CD8-positive, alpha-beta T cell (primary cell): ENCODE measurements at regions of chr1 and their contacts with region 1.

Region 1: DNA sequence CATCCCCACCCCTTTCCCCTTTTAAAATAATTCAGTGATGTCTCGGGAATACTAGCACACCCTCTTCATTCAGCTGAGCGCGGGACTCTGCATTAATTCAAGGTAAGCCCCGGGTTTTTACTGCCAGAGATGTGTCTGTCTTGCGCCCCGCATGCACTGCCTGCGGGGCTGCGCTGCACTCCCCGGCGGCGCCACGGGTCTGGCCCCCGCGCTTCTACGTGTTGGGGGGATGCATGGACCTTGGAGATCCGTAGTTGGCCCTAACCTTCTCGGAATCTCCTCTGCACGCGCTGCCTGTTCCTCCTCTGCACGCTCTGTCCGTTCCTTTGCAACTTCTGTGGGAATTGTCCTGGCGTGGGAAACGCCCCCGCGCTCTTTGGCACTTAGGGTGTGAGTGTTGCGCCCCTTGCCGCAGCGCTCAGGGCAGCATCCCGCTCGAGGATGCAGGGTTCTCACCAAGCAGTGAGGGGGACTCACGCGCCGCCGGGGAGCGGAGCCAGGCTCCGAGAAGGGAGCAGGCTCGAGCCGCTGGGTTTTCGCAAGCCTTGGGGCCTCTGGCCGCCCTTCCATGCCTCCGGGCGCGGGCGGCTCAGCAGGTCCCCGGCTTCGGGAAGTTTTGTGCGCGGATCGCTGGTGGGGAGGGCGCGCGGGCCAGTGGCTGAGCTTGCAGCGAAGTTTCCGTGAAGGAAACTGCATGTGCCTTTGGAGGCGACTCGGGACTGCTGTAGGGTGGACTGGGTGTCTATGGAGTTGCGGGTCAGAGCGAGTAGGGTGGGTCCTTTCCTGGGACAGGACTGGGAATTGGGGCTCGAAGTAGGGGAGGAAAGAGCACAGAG is 165.1 kb upstream of the CACNA1E start:
- DNase-seq: peak in 2 of 9 experiments; percentile 16 to 27
- ATAC-seq: peak; percentile 40
- H3K4me3 ChIP-seq: peak overlapping the region in 1 of 2 experiments; percentile 46
- H3K4me3 Mint-ChIP-seq: peak overlapping the region; percentile 80
- H3K27ac ChIP-seq: no peak overlapping the region
- H3K27ac Mint-ChIP-seq: no peak overlapping the region
- H3K4me1 ChIP-seq: peaks cover 19% of the 10 kb centered on the region
- H3K4me1 Mint-ChIP-seq: peaks cover 24% of the 10 kb centered on the region
- H3K27me3 ChIP-seq: peaks cover 13 to 23% of the 10 kb centered on the region in 2 experiments
- H3K27me3 Mint-ChIP-seq: peaks cover 57% of the 10 kb centered on the region
- CTCF ChIP-seq: no peak

Region 2: DNA sequence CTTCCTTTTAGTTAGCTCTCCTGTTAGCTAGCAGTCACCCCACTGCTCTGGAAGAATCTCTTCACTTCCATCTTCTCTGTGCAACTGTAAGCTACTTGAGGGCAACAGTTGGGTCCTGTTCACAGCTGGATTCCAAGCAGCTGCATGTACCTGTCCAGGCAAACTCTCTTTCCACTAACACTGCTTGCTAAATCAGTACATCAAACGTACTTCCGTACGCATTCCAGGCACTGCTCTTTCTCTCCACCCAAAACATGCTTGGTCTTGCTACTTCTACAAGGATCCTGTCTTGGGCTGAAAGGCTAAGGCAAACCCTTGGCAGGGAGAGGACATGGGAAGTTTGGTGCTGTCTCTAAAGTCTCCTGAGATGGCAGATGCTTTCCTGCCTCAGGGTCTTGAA is 25.9 kb after region 1 on chr1:
- CTCF ChIA-PET with region 1: no interaction called
- POLR2A ChIA-PET with region 1: no interaction called
- intact Hi-C with region 1: loop called in 1 of 2 experiments (anchors 1 kb)
- DNase-seq: no peak
- ATAC-seq: no peak
- H3K4me3 ChIP-seq: no peak overlapping the region
- H3K4me3 Mint-ChIP-seq: no peak overlapping the region
- H3K27ac ChIP-seq: no peak overlapping the region
- H3K27ac Mint-ChIP-seq: no peak overlapping the region
- H3K4me1 ChIP-seq: peaks cover 15% of the 10 kb centered on the region
- H3K4me1 Mint-ChIP-seq: peaks cover 19% of the 10 kb centered on the region
- H3K27me3 ChIP-seq: no peaks in the 10 kb centered on the region
- H3K27me3 Mint-ChIP-seq: no peaks in the 10 kb centered on the region
- CTCF ChIP-seq: no peak

Region 3: GRCh38 chr1:181568736-181569135 is 250.5 kb after region 1 on chr1:
- CTCF ChIA-PET with region 1: no interaction called
- POLR2A ChIA-PET with region 1: no interaction called
- intact Hi-C with region 1: no loop called
- DNase-seq: no peak
- ATAC-seq: no peak
- H3K4me3 ChIP-seq: no peak overlapping the region
- H3K4me3 Mint-ChIP-seq: no peak overlapping the region
- H3K27ac ChIP-seq: no peak overlapping the region
- H3K27ac Mint-ChIP-seq: no peak overlapping the region
- H3K4me1 ChIP-seq: no peaks in the 10 kb centered on the region
- H3K4me1 Mint-ChIP-seq: no peaks in the 10 kb centered on the region
- H3K27me3 ChIP-seq: no peaks in the 10 kb centered on the region
- H3K27me3 Mint-ChIP-seq: peaks cover 18% of the 10 kb centered on the region
- CTCF ChIP-seq: no peak